GM12878 (cell line): ENCODE measurements at regions of chr19 and their contacts with region 1.

Region 1: DNA sequence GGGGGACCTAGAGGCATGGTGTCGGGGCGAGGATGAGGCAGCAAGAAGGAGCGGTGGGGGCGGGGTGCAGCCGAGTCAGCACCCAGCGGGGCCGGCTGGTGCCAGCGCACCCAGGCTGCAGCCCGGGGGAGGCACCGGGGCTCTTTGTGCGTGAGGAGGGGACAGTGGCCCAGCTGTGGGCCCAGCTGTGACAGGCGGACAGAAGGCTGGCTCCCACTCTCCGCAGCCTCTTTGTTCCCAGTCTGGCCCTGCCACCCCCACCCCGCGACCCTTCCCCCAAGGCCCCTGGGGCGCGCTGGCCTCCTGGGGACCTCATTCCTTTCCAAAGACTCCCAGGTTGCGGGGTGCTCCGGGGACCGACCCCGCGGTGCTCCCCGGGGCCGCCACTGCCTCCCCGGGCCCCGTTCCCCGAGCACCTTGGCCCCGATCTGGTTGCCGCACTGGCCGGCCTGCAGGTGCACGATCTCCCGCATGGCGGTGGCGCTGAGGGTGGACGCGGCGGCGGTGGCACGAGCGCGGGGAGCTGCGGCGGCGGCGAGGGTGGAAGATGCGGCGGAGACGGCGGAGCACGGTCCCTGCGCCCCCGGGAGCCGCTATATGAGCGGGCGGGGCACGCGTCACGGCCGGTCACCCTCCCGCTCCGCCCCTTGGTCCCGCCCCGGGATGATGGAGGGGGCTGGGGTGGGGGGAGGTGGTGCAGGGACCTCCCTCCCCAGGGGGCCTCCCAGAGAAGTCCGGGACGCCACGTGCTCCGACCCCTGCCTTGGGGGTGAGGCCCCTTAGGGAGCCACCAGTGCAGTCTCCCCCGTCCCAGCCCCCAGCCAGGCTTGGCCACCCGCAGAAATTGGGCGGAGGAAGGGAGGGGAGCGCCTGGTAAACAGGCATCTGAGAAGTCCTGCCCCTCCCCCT is at the start of gene TUBB4A:
- DNase-seq: no peak
- ATAC-seq: peak; percentile 77
- H3K4me3 ChIP-seq: peak within 1 kb of the TSS; percentile 71
- H3K27ac ChIP-seq: no peak within 1 kb of the TSS
- H3K4me1 ChIP-seq: peaks cover 2% of the 10 kb centered on the region
- H3K27me3 ChIP-seq: peaks cover 0 to 2% of the 10 kb centered on the region in 2 experiments; a peak in 3 of 4 replicates
- CTCF ChIP-seq: peak in 1 of 3 experiments; percentile 14; a peak in 1 of 6 replicates
- EP300 ChIP-seq: no peak
- POLR2A ChIP-seq: peak; percentile 70
- RAD21 ChIP-seq: no peak
- polyA plus RNA-seq, gene TUBB4A: 0.79 to 0.85 TPM

Region 2: DNA sequence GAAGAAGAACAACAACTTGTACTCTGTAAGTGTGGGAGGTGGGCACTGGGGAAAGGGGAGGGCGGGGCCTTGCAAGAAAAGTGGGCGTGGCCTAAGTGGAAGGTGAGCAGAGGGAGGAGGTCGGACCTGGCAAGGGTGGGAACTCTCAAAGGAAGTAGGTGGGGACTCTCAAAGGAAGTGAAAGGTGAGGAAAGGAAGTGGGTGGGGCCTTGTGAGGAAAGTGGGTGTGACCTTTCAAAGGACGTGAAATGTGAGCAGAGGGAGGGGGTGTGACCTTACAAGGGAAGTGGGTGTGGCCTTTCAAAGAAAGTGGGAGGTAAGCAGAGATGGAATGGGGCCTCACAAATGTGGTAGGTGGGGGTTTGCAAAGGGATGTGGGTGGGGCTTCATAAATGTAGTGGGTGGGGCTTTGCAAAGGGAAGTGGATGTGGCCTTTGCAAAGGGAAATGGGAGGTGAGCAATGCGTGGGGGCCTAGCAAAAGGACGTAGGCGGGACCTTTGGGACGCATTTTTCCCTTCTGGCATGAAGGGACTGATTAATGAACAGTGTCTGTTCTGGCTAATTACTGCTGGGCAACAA is 340.6 kb before region 1 on chr19:
- CTCF ChIA-PET with region 1: interaction called, 3 read pairs
- POLR2A ChIA-PET with region 1: no interaction called
- RAD21 ChIA-PET with region 1: no interaction called
- SMC1A ChIA-PET with region 1: no interaction called
- in situ Hi-C with region 1: no loop called
- intact Hi-C with region 1: loop called (anchors 10 kb)
- DNase-seq: peak; percentile 52
- ATAC-seq: peak; percentile 71
- H3K4me3 ChIP-seq: no peak overlapping the region
- H3K27ac ChIP-seq: no peak overlapping the region
- H3K4me1 ChIP-seq: no peaks in the 10 kb centered on the region
- H3K27me3 ChIP-seq: no peaks in the 10 kb centered on the region
- CTCF ChIP-seq: no peak
- EP300 ChIP-seq: no peak
- POLR2A ChIP-seq: no peak
- RAD21 ChIP-seq: no peak

Region 3: DNA sequence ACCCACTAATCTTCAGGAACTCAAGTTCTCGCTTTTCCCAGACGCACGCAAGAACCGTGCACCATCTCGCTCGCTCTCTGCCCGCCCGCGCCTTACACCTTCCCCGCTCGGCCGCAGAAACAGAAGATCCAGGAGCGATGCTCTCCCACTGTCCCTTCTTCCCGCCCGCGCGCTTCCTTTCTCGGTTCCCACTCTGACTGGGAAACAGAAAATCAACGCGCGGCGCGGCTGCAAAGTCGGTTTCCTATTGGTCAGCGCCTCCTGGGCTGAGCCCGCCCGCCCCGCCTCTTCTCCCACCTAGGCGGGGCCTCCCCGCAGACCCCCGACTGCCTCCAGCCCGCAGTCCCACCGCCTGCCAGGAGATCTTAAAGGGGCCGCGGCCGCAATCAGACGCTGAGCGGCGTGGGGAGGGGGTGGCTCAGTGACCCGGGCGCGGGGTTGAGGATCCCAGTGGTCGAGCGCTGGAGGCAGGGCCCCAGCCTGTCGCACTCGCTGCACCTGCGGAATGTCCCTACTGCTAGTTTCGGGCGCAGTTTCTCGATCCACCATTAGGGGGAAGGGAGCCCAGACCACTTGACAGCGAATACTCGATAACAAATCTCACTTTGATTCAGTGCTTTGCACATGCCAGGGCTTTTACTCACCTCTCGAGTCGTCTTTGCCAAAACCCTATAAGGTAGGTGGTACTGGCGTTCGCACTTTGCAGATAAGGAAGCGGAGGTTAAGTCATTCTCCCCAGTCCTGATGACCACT is 41.7 kb before region 1 on chr19:
- CTCF ChIA-PET with region 1: interaction called, 5 read pairs
- POLR2A ChIA-PET with region 1: no interaction called
- RAD21 ChIA-PET with region 1: no interaction called
- SMC1A ChIA-PET with region 1: interaction called, 3 read pairs
- in situ Hi-C with region 1: no loop called
- intact Hi-C with region 1: loop called (anchors 2 kb)
- DNase-seq: peak; percentile 89
- ATAC-seq: peak; percentile 84
- H3K4me3 ChIP-seq: peak overlapping the region; percentile 80
- H3K27ac ChIP-seq: peak overlapping the region; percentile 94
- H3K4me1 ChIP-seq: peaks cover 10% of the 10 kb centered on the region
- H3K27me3 ChIP-seq: no peaks in the 10 kb centered on the region
- CTCF ChIP-seq: peak; percentile 57 to 67 (median 66)
- EP300 ChIP-seq: no peak
- POLR2A ChIP-seq: peak; percentile 82
- RAD21 ChIP-seq: peak; percentile 31

Region 4: DNA sequence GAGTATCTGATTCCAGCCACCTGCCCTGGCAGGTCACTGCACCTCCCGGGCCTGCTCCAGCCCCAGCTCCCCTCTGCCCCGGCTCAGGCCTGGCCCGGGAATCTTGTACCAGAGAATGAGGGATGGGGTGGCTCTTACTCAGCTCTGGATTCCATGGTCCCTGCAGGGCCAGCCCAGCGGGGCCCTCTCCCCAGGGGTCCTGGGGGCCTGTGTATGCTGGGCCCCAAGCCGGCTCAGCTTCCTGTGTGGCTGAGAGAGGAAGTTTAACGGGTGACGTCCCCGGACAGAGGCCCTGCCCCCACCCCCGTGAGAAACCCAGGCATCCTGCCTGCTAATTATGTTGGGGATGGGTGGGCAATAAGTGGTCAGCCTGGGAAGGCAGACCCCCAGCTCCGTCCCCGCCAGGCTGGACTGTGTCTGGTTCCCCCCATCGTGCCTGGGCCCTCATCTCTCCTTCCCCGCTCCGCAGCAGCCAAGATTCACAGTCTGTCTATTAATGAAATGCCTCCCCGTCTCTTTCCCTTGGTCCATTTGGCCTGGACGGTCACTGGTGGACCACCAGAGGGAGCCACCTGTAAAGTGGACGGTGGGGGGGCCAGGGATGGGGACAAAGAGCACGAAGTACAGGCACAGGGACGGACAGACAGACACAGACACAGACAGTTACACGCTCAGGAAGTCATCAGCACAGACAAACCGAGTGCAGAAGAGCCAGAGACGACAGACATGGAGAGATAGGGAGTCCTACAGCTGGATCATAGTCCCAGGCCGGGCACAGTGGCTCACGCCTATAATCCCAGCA is 20.3 kb before region 1 on chr19 and contains the start of gene DENND1C:
- CTCF ChIA-PET with region 1: interaction called, 12 read pairs
- POLR2A ChIA-PET with region 1: no interaction called
- RAD21 ChIA-PET with region 1: interaction called, 18 read pairs
- SMC1A ChIA-PET with region 1: interaction called, 5 read pairs
- in situ Hi-C with region 1: no loop called
- intact Hi-C with region 1: loop called (anchors 1 kb)
- DNase-seq: peak; percentile 45
- ATAC-seq: peak; percentile 95
- H3K4me3 ChIP-seq: peak within 1 kb of the TSS; percentile 69
- H3K27ac ChIP-seq: peak within 1 kb of the TSS; percentile 93
- H3K4me1 ChIP-seq: peaks cover 10% of the 10 kb centered on the region
- H3K27me3 ChIP-seq: no peaks in the 10 kb centered on the region
- CTCF ChIP-seq: peak; percentile 51 to 64 (median 61); a peak in 4 of 6 replicates
- EP300 ChIP-seq: no peak
- POLR2A ChIP-seq: peak; percentile 82
- RAD21 ChIP-seq: peak; percentile 53
- polyA plus RNA-seq, gene DENND1C: 2.4 to 2.8 TPM

Region 5: DNA sequence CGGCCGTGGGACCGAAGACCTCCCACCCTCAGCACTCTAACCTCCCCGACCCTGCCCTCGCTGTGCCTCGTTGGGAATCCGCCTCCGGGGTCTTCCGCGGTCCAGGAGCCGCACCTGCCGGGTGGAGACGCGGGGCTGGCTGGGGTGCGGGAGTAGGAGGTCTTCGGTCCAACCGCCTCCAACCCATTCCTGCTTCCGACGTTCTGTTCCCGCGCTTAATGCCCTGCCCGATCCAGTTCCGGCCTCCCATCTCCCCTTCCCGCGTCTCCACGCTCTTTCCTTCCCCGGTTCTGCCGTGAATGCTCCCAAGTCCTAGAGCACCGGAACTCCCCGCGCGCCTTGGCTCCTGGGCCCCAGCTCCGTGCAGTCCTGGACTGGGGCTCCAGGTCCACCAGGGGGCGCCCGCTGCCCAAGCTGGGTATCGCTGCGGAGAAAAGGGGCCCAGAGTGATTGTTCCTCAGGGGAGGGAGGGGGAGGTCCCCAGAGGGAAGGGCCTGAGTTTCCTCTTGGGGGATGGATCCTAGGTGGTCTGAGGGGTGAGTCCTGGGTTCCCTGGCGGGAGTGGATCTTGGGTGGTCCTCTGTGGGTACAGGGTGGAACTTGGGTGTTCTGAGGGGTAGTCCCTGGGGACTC is 14.8 kb after region 1 on chr19:
- CTCF ChIA-PET with region 1: no interaction called
- POLR2A ChIA-PET with region 1: no interaction called
- RAD21 ChIA-PET with region 1: no interaction called
- SMC1A ChIA-PET with region 1: no interaction called
- in situ Hi-C with region 1: no loop called
- intact Hi-C with region 1: no loop called
- DNase-seq: no peak
- ATAC-seq: peak; percentile 83
- H3K4me3 ChIP-seq: peak overlapping the region; percentile 92
- H3K27ac ChIP-seq: peak overlapping the region; percentile 98
- H3K4me1 ChIP-seq: peaks cover 33% of the 10 kb centered on the region
- H3K27me3 ChIP-seq: no peaks in the 10 kb centered on the region
- CTCF ChIP-seq: peak; percentile 96 to 99 (median 97); a peak in 5 of 6 replicates
- EP300 ChIP-seq: 0 out of 4 replicates have a peak, but pooled peaks of 1 of the 2 experiments have one; percentile 13
- POLR2A ChIP-seq: peak; percentile 63; the same call in 1 of the 2 replicates
- RAD21 ChIP-seq: peak; percentile 100